ENCODE measurements at regions of chr5 and their contacts with region 1.

Region 1: GRCh38 chr5:52787600-52788504 is at the starts of genes ITGA1 and PELO:
- DNase-seq: peak; percentile 81 to 86
- ATAC-seq: peak; percentile 82
- total RNA-seq, gene ITGA1: 25.2 to 47.0 TPM
- total RNA-seq, gene PELO: 16.4 to 21.2 TPM

Region 2: GRCh38 chr5:52915176-52915875 is 127.5 kb after region 1 on chr5:
- intact Hi-C with region 1: loop called in 1 of 2 experiments (anchors 2 kb)
- DNase-seq: no peak
- ATAC-seq: peak; percentile 88

Region 3: DNA sequence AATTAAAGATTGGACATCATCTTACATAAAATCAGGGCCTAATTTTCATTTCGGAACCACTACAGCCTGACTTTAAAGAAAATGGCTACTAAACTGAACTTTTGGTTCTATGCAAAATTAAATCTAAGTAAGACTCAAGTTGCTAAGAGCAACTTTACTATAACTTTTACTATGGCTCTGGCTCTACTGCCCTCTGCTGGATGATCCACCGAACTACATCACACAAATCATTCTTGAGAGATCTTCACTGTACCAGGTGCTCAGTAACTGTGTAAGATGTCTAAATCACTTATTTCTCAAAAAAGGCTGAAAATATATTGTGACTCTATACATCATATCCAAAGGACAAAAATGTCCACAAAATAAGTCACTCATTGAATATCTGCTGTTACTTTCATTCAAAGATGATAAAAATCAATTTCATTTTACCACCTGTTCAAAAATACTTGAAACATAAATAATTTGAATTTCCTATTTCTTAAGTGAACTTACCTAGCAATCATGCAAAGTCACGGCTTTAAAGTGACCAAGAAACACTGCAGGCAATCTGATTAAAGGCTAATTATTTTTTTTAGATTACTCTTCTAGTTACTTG is 308.2 kb after region 1 on chr5:
- intact Hi-C with region 1: loop called in 1 of 2 experiments (anchors 10 kb)
- DNase-seq: peak in 1 of 2 donors; percentile 66
- ATAC-seq: peak; percentile 67

Region 4: GRCh38 chr5:53262348-53262970 is 474.6 kb after region 1 on chr5:
- intact Hi-C with region 1: no loop called
- DNase-seq: no peak
- ATAC-seq: no peak

Measured in left colon (tissue), 2 donors.